ENCODE measurements at regions of chr2 and their contacts with region 1.

Region 1: DNA sequence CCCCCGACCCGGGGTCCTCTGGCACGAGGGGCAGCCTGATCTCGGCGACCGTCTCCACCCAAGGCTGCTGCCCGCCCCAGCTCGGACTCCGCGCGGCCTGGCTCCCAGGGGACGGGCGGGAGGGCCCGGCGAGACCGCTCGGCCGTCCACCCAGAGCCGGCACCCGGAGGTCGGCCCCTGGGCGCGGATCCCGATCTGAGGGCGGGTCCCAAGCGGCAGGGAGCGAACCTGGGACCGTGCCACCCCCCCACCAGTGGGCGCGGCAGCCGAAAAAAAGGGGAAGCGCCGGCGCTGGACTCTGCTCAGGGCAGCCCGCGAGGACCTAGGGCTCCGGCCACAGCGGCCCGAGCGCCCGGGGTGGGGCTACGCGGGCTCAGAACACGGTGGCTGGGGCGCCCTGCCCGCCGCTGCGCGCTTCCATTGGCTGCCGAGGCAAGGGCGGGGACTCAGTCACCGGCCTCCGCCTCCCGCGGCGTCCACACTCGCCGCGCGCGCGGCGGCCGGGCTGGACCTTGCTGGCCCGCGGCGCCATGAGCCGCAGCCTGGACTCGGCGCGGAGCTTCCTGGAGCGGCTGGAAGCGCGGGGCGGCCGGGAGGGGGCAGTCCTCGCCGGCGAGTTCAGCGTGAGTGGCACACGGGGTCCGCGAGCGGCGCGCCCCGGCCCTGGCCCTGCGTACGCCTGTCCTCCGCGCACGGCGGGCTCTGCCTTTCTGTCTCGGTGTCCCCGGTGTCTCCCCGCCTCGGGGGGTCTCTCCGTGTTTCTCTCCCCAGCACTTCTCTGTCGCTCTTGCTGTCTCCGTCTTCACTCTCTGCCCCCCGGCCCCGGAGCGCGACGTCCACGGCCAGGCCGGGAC is at the start of gene PTPN18:
- DNase-seq: peak; percentile 94
- H3K4me3 ChIP-seq: peak within 1 kb of the TSS; percentile 82 to 93 (median 86)
- H3K27ac ChIP-seq: peak within 1 kb of the TSS; percentile 82 to 89 (median 88)
- H3K4me1 ChIP-seq: peaks cover 19 to 47% (median 33%) of the 10 kb centered on the region in 4 donors
- H3K27me3 ChIP-seq: no peaks in the 10 kb centered on the region
- CTCF ChIP-seq: peak; percentile 61 to 70 (median 64)
- EP300 ChIP-seq: no peak
- POLR2A ChIP-seq: peak; percentile 37
- total RNA-seq, gene PTPN18: 36.6 to 60.2 (median 50.3) TPM

Region 2: DNA sequence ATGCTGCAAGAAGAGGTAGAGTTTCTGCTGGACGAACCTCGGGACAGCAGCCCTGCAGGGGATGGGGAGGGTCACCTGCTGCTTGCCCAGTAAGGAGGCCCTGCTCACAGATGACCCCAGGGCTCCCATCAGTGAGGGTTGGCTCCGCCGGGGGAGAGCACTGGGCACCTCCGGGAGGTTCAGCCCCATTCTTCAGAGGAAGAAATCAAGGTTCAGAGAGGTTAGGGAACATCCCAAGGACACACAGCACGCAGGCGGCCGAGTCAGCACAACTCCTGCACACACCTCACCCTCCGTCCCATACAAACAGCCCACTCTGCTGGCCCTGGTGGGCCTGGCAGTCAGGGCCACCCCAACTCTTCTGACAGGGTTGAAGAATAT is 199.2 kb before region 1 on chr2:
- intact Hi-C with region 1: no loop called
- DNase-seq: no peak
- H3K4me3 ChIP-seq: no peak overlapping the region
- H3K27ac ChIP-seq: no peak overlapping the region
- H3K4me1 ChIP-seq: peaks cover 0 to 5% (median 1%) of the 10 kb centered on the region in 4 donors
- H3K27me3 ChIP-seq: no peaks in the 10 kb centered on the region
- CTCF ChIP-seq: no peak
- EP300 ChIP-seq: no peak
- POLR2A ChIP-seq: no peak

Region 3: GRCh38 chr2:130231656-130232055 is 124.1 kb before region 1 on chr2:
- intact Hi-C with region 1: no loop called
- DNase-seq: no peak
- H3K4me3 ChIP-seq: no peak overlapping the region
- H3K27ac ChIP-seq: no peak overlapping the region
- H3K4me1 ChIP-seq: peaks cover 0 to 13% (median 0%) of the 10 kb centered on the region in 4 donors
- H3K27me3 ChIP-seq: peaks cover 0 to 31% (median 2%) of the 10 kb centered on the region in 4 donors
- CTCF ChIP-seq: no peak
- EP300 ChIP-seq: no peak
- POLR2A ChIP-seq: no peak

Region 4: DNA sequence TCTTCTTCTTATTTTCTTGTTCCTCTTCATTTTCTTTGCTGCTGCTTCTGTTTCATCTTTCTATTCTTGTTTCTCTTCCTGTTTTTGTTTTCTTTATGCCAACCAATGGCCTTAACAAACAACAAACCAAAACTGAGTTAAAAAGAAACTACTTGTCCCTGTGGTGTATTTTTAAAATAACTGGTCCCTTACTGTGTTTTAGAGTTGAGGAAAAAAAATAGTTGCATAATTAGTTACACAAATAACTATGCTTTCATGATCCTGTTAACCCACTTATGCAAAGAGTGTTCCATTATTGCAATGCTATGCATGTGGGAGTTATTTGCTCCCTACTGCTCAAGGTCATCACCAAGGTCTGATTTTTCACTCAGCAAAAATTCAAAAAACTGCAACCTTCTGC is 52.6 kb before region 1 on chr2:
- intact Hi-C with region 1: no loop called
- DNase-seq: no peak
- H3K4me3 ChIP-seq: no peak overlapping the region
- H3K27ac ChIP-seq: no peak overlapping the region
- H3K4me1 ChIP-seq: no peaks in the 10 kb centered on the region
- H3K27me3 ChIP-seq: peaks cover 0 to 30% (median 0%) of the 10 kb centered on the region in 4 donors
- CTCF ChIP-seq: no peak
- EP300 ChIP-seq: no peak
- POLR2A ChIP-seq: no peak

Region 5: GRCh38 chr2:130372055-130372832 is 16.4 kb after region 1 on chr2:
- intact Hi-C with region 1: loop called (anchors 2 kb)
- DNase-seq: peak; percentile 96
- H3K4me3 ChIP-seq: peak overlapping the region; percentile 85 to 97 (median 90)
- H3K27ac ChIP-seq: peak overlapping the region; percentile 84 to 94 (median 88)
- H3K4me1 ChIP-seq: peaks cover 26 to 50% (median 45%) of the 10 kb centered on the region in 4 donors
- H3K27me3 ChIP-seq: no peaks in the 10 kb centered on the region
- CTCF ChIP-seq: peak; percentile 77 to 93 (median 93)
- EP300 ChIP-seq: no peak
- POLR2A ChIP-seq: peak; percentile 47

Region 6: GRCh38 chr2:130382313-130382917 is 26.6 kb after region 1 on chr2:
- intact Hi-C with region 1: no loop called
- DNase-seq: no peak
- H3K4me3 ChIP-seq: no peak overlapping the region
- H3K27ac ChIP-seq: no peak overlapping the region
- H3K4me1 ChIP-seq: peaks cover 13 to 20% (median 16%) of the 10 kb centered on the region in 4 donors
- H3K27me3 ChIP-seq: no peaks in the 10 kb centered on the region
- CTCF ChIP-seq: no peak
- EP300 ChIP-seq: no peak
- POLR2A ChIP-seq: no peak

Measured in esophagus muscularis mucosa (tissue), 4 donors.